Endothelial cell of umbilical vein (primary cell): ENCODE measurements at regions of chr11 and their contacts with region 1.

Region 1: GRCh38 chr11:62880803-62881578 is at the start of gene SLC3A2:
- DNase-seq: peak; percentile 91
- H3K4me3 ChIP-seq: peak within 1 kb of the TSS; percentile 75 to 100 (median 95)
- H3K27ac ChIP-seq: peak within 1 kb of the TSS; percentile 100
- H3K4me1 ChIP-seq: peaks cover 45% of the 10 kb centered on the region
- H3K27me3 ChIP-seq: no peaks in the 10 kb centered on the region
- CTCF ChIP-seq: peak; percentile 63 to 89
- POLR2A ChIP-seq: peak; percentile 99
- total RNA-seq, gene SLC3A2: 190 and 208 TPM in 2 replicates

Region 2: GRCh38 chr11:62427630-62428233 is 453.3 kb before region 1 on chr11:
- CTCF ChIA-PET with region 1: no interaction called
- POLR2A ChIA-PET with region 1: no interaction called
- dilution Hi-C with region 1: no loop called
- intact Hi-C with region 1: no loop called
- DNase-seq: no peak
- H3K4me3 ChIP-seq: no peak overlapping the region
- H3K27ac ChIP-seq: no peak overlapping the region
- H3K4me1 ChIP-seq: no peaks in the 10 kb centered on the region
- H3K27me3 ChIP-seq: peaks cover 0 to 3% of the 10 kb centered on the region in 2 experiments
- CTCF ChIP-seq: no peak
- POLR2A ChIP-seq: no peak

Region 3: GRCh38 chr11:62771144-62772021 is 109.6 kb before region 1 on chr11 and contains the start of gene TAF6L:
- CTCF ChIA-PET with region 1: no interaction called
- POLR2A ChIA-PET with region 1: interaction called, 3 read pairs
- dilution Hi-C with region 1: no loop called
- intact Hi-C with region 1: loop called (anchors 5 kb)
- DNase-seq: peak; percentile 96
- H3K4me3 ChIP-seq: peak within 1 kb of the TSS; percentile 4 to 53 (median 48)
- H3K27ac ChIP-seq: peak within 1 kb of the TSS; percentile 39
- H3K4me1 ChIP-seq: peaks cover 11% of the 10 kb centered on the region
- H3K27me3 ChIP-seq: no peaks in the 10 kb centered on the region
- CTCF ChIP-seq: no peak
- POLR2A ChIP-seq: peak; percentile 74
- total RNA-seq, gene TAF6L: 28.9 and 30.4 TPM in 2 replicates

Region 4: DNA sequence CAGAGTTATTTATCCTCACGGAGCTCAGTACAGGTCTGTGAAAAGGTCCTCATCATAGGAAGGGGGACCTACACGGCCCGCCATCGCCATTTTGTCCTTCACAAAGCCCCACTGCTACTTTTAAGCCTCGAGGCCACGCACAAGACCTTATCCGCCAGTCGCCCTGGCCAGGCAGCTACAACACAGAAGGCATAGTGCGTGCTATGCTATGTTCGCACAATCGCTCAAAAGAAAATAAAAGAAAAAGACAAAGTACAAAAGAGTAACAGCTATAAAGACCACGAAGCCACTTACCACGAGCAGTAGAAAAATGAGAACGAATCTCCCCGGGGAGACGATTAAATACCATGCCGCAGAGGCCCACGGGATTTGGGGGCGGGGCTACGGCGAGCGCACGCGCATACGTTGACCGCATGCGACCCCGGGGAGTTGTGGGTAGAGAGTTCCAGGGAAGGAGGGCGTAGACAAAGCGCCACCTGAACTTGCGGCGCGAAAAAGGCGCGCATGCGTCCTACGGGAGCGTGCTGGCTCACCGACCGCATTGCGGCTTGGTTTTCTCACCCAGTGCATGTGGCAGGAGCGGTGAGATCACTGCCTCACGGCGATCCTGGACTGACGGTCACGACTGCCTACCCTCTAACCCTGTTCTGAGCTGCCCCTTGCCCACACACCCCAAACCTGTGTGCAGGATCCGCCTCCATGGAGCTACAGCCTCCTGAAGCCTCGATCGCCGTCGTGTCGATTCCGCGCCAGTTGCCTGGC is 25.2 kb before region 1 on chr11:
- CTCF ChIA-PET with region 1: interaction called, 20 read pairs
- POLR2A ChIA-PET with region 1: interaction called, 11 read pairs
- dilution Hi-C with region 1: no loop called
- intact Hi-C with region 1: loop called (anchors 1 kb)
- DNase-seq: peak; percentile 98
- H3K4me3 ChIP-seq: peak overlapping the region; percentile 61 to 94 (median 87)
- H3K27ac ChIP-seq: peak overlapping the region; percentile 54
- H3K4me1 ChIP-seq: peaks cover 24% of the 10 kb centered on the region
- H3K27me3 ChIP-seq: no peaks in the 10 kb centered on the region
- CTCF ChIP-seq: no peak
- POLR2A ChIP-seq: peak; percentile 100

Region 5: DNA sequence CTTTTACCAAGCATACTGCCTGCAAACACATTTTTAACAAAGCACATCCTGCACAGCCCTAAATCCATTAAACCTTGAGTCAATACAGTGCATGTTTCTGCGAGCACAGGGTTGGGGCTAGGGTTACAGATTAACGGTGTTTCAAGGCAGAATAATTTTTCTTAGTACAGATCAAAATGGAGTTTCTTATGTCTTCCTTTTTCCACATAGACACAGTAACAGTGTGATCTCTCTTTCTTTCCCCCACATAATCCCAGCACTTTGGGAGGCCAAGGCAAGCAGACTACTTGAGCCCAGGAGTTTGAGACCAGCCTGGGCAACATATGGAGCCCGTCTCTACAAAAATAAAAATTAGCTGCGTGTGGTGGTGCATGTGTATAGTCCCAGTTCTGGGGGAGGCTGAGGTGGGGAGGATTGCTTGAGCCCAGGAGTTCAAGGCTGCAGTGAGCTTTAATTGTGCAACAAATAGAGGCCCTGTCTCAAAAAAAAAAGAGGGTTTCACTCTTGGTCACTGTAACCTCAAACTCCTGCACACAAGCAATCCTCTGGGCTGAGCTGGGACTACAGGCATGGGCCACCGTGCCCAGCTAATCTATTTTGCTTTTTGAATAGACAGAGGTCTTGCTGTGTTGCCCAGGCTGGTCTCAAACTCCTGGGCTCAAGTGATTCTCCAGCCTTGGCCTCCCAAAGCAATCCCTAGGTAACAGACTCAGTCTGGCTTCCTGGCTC is 20.0 kb before region 1 on chr11:
- CTCF ChIA-PET with region 1: interaction called, 20 read pairs
- POLR2A ChIA-PET with region 1: interaction called, 11 read pairs
- dilution Hi-C with region 1: no loop called
- intact Hi-C with region 1: no loop called
- DNase-seq: no peak
- H3K4me3 ChIP-seq: no peak overlapping the region
- H3K27ac ChIP-seq: no peak overlapping the region
- H3K4me1 ChIP-seq: peaks cover 6% of the 10 kb centered on the region
- H3K27me3 ChIP-seq: no peaks in the 10 kb centered on the region
- CTCF ChIP-seq: no peak
- POLR2A ChIP-seq: no peak